ENCODE measurements at regions of chr10 and their contacts with region 1.

Region 1: DNA sequence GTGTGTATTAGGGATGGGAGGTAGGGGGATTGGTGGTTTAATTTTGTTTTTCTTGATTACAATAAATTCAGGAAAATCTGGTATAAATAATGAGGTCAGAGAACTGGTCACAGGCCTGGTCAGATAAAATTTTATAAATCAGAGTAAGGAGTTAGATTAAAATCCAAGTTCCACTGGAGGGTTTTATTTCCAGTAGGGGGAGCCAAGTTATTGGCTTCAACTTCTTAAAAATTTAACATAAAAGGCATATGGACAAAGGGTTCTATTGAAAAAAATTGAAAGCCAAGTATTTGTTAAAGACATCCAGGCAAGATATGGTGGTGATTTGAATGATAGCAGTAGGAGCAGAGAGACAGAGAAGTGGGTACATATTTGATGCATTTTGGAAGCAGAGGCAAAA is 763.3 kb downstream of the SORCS1 start:
- DNase-seq: no peak
- H3K4me3 Mint-ChIP-seq: no peak overlapping the region
- H3K27ac Mint-ChIP-seq: no peak overlapping the region
- H3K4me1 Mint-ChIP-seq: peaks cover 9% of the 10 kb centered on the region
- H3K27me3 Mint-ChIP-seq: no peaks in the 10 kb centered on the region
- CTCF ChIP-seq: peak; percentile 31

Region 2: GRCh38 chr10:106301146-106301545 is 100.0 kb before region 1 on chr10:
- CTCF ChIA-PET with region 1: no interaction called
- intact Hi-C with region 1: no loop called
- DNase-seq: no peak
- H3K4me3 Mint-ChIP-seq: no peak overlapping the region
- H3K27ac Mint-ChIP-seq: no peak overlapping the region
- H3K4me1 Mint-ChIP-seq: no peaks in the 10 kb centered on the region
- H3K27me3 Mint-ChIP-seq: no peaks in the 10 kb centered on the region
- CTCF ChIP-seq: no peak

Region 3: GRCh38 chr10:106506509-106507265 is 105.5 kb after region 1 on chr10:
- CTCF ChIA-PET with region 1: no interaction called
- intact Hi-C with region 1: loop called (anchors 10 kb)
- DNase-seq: no peak
- H3K4me3 Mint-ChIP-seq: no peak overlapping the region
- H3K27ac Mint-ChIP-seq: no peak overlapping the region
- H3K4me1 Mint-ChIP-seq: peaks cover 19% of the 10 kb centered on the region
- H3K27me3 Mint-ChIP-seq: no peaks in the 10 kb centered on the region
- CTCF ChIP-seq: no peak

Region 4: DNA sequence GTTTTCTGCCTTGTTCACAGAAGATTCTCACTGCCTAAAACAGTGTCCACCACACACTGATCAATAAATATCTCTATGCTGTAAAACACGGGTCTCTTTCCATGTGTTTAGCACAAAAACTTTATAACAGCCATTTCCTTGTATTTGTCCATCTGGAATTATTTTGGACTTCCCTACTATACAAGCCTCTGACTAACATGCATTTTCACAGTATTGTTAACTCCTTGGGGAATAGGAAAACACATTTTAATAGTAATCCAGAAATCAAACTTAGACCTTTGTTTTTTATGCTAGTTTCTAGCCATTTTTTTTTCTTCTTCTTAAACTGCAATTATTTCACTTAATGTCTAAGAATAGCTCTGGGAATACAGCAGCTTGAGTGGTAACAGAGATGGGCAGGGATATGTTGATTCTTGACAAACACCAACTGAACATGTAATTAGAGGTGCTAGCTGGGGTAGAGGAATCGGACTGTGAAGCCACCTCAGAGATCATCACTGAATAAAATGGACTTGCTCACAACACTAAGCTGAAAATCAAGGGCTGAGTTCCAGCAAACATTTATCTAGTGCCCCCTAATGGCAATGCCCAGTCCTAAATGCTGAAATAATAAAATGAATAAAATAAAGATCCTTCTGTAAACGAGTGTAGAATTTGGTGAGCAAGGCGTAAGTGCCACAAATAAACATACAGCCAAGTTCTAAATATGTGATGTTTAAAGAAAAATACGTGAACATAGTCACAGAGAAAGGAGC is 170.2 kb after region 1 on chr10:
- CTCF ChIA-PET with region 1: no interaction called
- intact Hi-C with region 1: loop called (anchors 1 kb)
- DNase-seq: peak; percentile 4
- H3K4me3 Mint-ChIP-seq: no peak overlapping the region
- H3K27ac Mint-ChIP-seq: no peak overlapping the region
- H3K4me1 Mint-ChIP-seq: peaks cover 9% of the 10 kb centered on the region
- H3K27me3 Mint-ChIP-seq: no peaks in the 10 kb centered on the region
- CTCF ChIP-seq: peak; percentile 37

Region 5: DNA sequence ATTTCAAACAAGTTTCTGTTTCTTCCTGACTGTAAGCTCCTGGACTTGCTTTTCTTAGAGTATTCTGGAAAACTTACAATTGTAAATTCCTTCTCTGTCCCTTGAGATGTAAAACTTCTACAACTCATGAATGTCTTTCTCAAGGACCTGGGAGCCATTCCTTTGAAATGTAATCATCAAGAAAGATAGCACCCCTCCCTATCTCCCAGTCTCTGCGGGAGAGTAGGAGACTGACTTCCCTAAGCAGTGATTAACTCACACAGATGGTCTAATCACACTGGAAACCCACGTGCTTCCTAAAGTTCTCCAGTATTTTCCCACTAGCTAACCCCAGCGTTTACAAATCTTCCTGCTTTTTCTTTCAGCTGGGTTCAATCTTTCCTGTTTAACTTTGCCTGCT is 213.9 kb after region 1 on chr10:
- CTCF ChIA-PET with region 1: no interaction called
- intact Hi-C with region 1: no loop called
- DNase-seq: no peak
- H3K4me3 Mint-ChIP-seq: no peak overlapping the region
- H3K27ac Mint-ChIP-seq: peak overlapping the region; percentile 37
- H3K4me1 Mint-ChIP-seq: peaks cover 23% of the 10 kb centered on the region
- H3K27me3 Mint-ChIP-seq: no peaks in the 10 kb centered on the region
- CTCF ChIP-seq: no peak

Region 6: GRCh38 chr10:106682175-106682574 is 281.0 kb after region 1 on chr10:
- CTCF ChIA-PET with region 1: no interaction called
- intact Hi-C with region 1: loop called (anchors 2 kb)
- DNase-seq: no peak
- H3K4me3 Mint-ChIP-seq: no peak overlapping the region
- H3K27ac Mint-ChIP-seq: no peak overlapping the region
- H3K4me1 Mint-ChIP-seq: no peaks in the 10 kb centered on the region
- H3K27me3 Mint-ChIP-seq: peaks cover 27% of the 10 kb centered on the region
- CTCF ChIP-seq: no peak

Measured in Calu3 (cell line).